ENCODE measurements at regions of chr3 and their contacts with region 1.

Region 1: GRCh38 chr3:195727606-195728195 is 6.9 kb downstream of the MUC20 start:
- DNase-seq: no peak
- ATAC-seq: no peak
- H3K4me3 ChIP-seq: no peak overlapping the region
- H3K27ac ChIP-seq: no peak overlapping the region
- H3K4me1 ChIP-seq: no peaks in the 10 kb centered on the region
- H3K27me3 ChIP-seq: peaks cover 0 to 14% (median 0%) of the 10 kb centered on the region in 9 donors
- CTCF ChIP-seq: no peak
- POLR2A ChIP-seq: no peak

Region 2: DNA sequence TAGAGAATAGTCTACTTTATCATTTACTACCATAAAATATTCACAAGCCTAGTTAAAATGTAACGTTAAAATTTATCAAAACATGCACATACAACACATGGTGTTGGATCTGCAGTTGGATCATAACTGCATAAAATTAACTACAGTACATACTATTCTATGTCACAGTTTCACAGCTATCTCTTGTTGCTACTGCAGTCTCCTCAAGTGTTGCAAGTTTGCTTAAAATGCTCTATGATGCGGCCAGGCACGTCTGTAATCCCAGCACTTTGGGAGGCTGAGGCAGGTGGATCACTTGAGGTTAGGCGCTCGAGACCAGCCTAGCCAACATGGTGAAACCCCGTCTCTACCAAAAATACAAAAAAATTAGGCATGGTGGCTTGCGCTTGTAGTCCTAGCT is 194.9 kb before region 1 on chr3:
- intact Hi-C with region 1: no loop called
- DNase-seq: no peak
- ATAC-seq: peak in 1 of 4 donors; percentile 9
- H3K4me3 ChIP-seq: no peak overlapping the region
- H3K27ac ChIP-seq: no peak overlapping the region
- H3K4me1 ChIP-seq: peaks cover 0 to 38% (median 15%) of the 10 kb centered on the region in 12 donors
- H3K27me3 ChIP-seq: no peaks in the 10 kb centered on the region
- CTCF ChIP-seq: no peak
- POLR2A ChIP-seq: no peak

Region 3: GRCh38 chr3:195748661-195749060 is 21.0 kb after region 1 on chr3:
- intact Hi-C with region 1: loop called in 2 of 10 experiments (anchors 2 kb)
- DNase-seq: no peak
- ATAC-seq: peak in 3 of 4 donors; percentile 8 to 27 (median 10)
- H3K4me3 ChIP-seq: no peak overlapping the region
- H3K27ac ChIP-seq: no peak overlapping the region
- H3K4me1 ChIP-seq: peaks cover 0 to 7% (median 0%) of the 10 kb centered on the region in 12 donors
- H3K27me3 ChIP-seq: peaks cover 0 to 16% (median 6%) of the 10 kb centered on the region in 9 donors
- CTCF ChIP-seq: no peak
- POLR2A ChIP-seq: no peak